ENCODE measurements at regions of chr5 and their contacts with region 1.

Region 1: GRCh38 chr5:129904102-129904666 is at the start of gene CHSY3:
- DNase-seq: peak; percentile 90 to 96 (median 95)
- ATAC-seq: peak; percentile 97 to 98
- H3K4me3 ChIP-seq: peak within 1 kb of the TSS; percentile 40
- H3K27ac ChIP-seq: peak within 1 kb of the TSS; percentile 73
- H3K4me1 ChIP-seq: peaks cover 2% of the 10 kb centered on the region
- H3K27me3 ChIP-seq: no peaks in the 10 kb centered on the region
- total RNA-seq, gene CHSY3: 1.7 to 3.6 (median 2.3) TPM

Region 2: DNA sequence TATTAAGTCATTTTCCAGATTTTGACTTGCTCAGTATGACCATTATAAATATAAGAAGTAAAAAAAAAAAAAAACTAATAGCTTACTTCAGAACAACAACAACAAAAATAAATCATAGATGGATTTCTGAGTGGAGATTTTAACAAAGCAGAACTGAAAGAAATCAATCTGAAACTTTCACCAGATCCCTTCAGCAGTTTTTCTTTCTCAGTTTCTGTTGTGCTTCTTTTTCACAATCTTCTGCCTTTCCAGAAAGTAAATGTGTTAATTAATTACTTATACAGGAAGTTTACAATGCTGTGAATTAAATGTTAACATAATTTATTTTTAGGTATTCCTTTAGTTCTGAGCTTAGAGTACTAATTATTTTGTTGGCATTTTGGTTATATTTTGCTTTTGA is 73.6 kb after region 1 on chr5:
- intact Hi-C with region 1: no loop called
- DNase-seq: no peak
- ATAC-seq: no peak
- H3K4me3 ChIP-seq: no peak overlapping the region
- H3K27ac ChIP-seq: no peak overlapping the region
- H3K4me1 ChIP-seq: no peaks in the 10 kb centered on the region
- H3K27me3 ChIP-seq: no peaks in the 10 kb centered on the region

Region 3: DNA sequence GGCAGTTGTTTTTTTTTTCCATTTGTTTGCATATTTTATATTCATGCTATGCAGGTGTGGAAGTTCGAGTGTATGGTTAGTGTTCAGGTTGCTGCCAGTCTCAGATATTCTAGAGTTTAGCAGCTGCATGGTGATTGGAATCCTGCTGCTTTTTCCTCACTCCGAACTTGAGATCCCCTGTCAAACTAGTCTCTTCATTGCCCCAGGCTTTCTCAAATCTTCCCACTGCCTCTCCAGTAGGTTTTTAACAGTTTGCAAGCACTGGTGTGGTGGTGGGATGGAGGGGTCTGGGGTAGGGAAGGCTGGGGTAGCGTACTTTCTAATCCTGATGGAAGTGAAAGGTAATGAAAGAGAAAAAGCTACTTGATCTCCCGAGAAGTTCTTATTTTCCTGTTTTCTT is 113.0 kb after region 1 on chr5:
- intact Hi-C with region 1: no loop called
- DNase-seq: no peak
- ATAC-seq: no peak
- H3K4me3 ChIP-seq: no peak overlapping the region
- H3K27ac ChIP-seq: no peak overlapping the region
- H3K4me1 ChIP-seq: no peaks in the 10 kb centered on the region
- H3K27me3 ChIP-seq: no peaks in the 10 kb centered on the region

Region 4: GRCh38 chr5:130077007-130077406 is 172.8 kb after region 1 on chr5:
- intact Hi-C with region 1: no loop called
- DNase-seq: no peak
- ATAC-seq: no peak
- H3K4me3 ChIP-seq: no peak overlapping the region
- H3K27ac ChIP-seq: no peak overlapping the region
- H3K4me1 ChIP-seq: no peaks in the 10 kb centered on the region
- H3K27me3 ChIP-seq: no peaks in the 10 kb centered on the region

Region 5: DNA sequence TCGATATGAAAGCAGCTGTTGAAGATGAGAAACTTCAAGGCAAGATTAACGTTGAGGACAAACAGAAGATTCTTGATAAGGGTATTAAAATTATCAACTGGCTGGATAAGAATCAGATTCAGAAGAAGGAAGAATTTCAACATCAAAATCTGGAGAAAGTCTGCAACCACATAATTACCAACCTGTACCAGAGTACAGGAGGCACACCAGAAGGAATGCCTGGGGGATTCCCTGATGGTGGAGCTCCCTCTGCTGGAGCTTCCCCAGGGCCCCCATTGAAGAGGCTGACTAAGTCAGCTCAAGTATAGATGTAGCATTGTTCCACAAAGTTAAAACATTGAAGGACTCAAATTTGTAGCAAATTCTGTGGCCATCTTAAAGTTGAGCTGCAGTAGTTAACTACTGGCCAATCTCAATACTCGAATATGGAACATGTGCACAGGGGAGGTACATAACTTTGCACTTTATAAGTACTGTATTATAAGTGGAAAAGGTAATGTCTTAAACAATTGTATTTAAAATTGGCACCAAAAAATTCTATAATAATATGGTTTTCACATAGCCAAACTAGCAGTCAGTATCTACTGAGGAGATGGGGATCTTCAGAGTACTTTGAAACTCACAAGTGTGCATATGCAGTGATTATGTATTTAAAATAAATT is 237.6 kb after region 1 on chr5:
- intact Hi-C with region 1: loop called in 3 of 4 experiments (anchors 5 kb)
- DNase-seq: peak in 2 of 3 donors; percentile 61 to 68
- ATAC-seq: peak in 1 of 2 donors; percentile 52
- H3K4me3 ChIP-seq: no peak overlapping the region
- H3K27ac ChIP-seq: no peak overlapping the region
- H3K4me1 ChIP-seq: peaks cover 3% of the 10 kb centered on the region
- H3K27me3 ChIP-seq: no peaks in the 10 kb centered on the region

Region 6: GRCh38 chr5:131109540-131110255 is 1205.5 kb after region 1 on chr5:
- intact Hi-C with region 1: loop called in 2 of 4 experiments (anchors 5 to 10 kb)
- DNase-seq: no peak
- ATAC-seq: peak; percentile 64
- H3K4me3 ChIP-seq: no peak overlapping the region
- H3K27ac ChIP-seq: no peak overlapping the region
- H3K4me1 ChIP-seq: no peaks in the 10 kb centered on the region
- H3K27me3 ChIP-seq: no peaks in the 10 kb centered on the region

Region 7: GRCh38 chr5:131417240-131417869 is 1513.2 kb after region 1 on chr5:
- intact Hi-C with region 1: loop called in 1 of 4 experiments (anchors 10 kb)
- DNase-seq: peak; percentile 76 to 90 (median 82)
- ATAC-seq: peak; percentile 33 to 40
- H3K4me3 ChIP-seq: no peak overlapping the region
- H3K27ac ChIP-seq: no peak overlapping the region
- H3K4me1 ChIP-seq: no peaks in the 10 kb centered on the region
- H3K27me3 ChIP-seq: no peaks in the 10 kb centered on the region